ENCODE measurements at regions of chr20 and their contacts with region 1.

Region 1: GRCh38 chr20:43408848-43409576 is 48.7 kb upstream of the SRSF6 start:
- DNase-seq: peak; percentile 40
- H3K4me3 Mint-ChIP-seq: no peak overlapping the region
- H3K27ac Mint-ChIP-seq: no peak overlapping the region
- H3K4me1 Mint-ChIP-seq: no peaks in the 10 kb centered on the region
- H3K27me3 Mint-ChIP-seq: peaks cover 78% of the 10 kb centered on the region
- CTCF ChIP-seq: peak; percentile 79

Region 2: DNA sequence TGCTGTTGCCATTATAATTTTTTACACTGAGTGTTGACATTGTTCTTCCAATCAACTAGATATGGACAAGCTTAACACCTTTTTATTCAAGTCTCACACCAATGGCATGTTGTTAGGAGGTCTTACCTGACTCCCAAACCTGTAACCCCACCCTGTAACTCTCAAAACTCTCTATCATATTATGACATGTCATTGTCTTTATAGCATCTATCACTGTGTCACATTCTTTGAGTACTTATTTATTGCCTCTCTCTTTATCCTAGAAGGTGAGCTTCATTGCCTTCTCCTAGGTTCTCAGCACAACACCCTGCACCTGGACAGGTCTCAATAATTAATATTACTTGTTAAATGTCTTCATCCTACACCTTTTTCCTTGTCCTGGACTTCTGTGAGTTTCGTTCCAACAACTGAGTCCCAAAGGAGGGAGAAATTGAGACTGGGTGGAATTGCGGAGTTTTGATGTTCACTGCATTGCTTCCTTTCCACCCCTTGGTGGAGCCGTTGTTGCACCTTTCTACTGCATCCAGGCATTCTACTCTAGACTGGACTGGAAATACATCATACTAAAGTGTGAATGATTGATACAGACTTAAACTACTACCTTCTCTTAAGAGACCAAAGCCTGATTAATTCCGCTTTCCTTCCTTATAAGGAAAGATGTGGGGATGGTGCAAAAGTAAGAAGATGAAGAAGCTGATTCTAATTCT is 1452.9 kb before region 1 on chr20:
- CTCF ChIA-PET with region 1: interaction called, 3 read pairs
- intact Hi-C with region 1: loop called (anchors 5 kb)
- DNase-seq: peak; percentile 18
- H3K4me3 Mint-ChIP-seq: no peak overlapping the region
- H3K27ac Mint-ChIP-seq: no peak overlapping the region
- H3K4me1 Mint-ChIP-seq: no peaks in the 10 kb centered on the region
- H3K27me3 Mint-ChIP-seq: peaks cover 38% of the 10 kb centered on the region
- CTCF ChIP-seq: peak; percentile 23

Region 3: DNA sequence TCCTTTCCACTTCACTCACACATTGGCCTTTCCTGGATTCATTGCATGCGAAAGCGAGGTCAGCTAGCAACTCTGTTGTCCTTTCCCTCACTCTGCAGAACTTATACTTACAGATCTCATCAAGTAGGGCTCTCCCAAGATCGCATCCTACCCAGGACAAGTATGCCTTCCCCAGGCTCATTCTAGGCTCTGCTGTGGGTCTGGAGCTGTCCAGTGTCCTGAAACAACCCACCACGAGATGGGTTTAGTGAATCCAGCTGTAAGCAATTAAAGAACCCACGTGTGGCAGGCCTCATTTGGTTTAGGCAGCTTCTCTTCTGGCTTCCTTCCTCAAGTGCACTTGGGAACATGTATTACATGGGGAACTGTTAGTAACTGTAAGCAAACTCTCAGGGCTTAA is 1384.4 kb before region 1 on chr20:
- CTCF ChIA-PET with region 1: no interaction called
- intact Hi-C with region 1: loop called (anchors 5 kb)
- DNase-seq: no peak
- H3K4me3 Mint-ChIP-seq: no peak overlapping the region
- H3K27ac Mint-ChIP-seq: no peak overlapping the region
- H3K4me1 Mint-ChIP-seq: no peaks in the 10 kb centered on the region
- H3K27me3 Mint-ChIP-seq: peaks cover 18% of the 10 kb centered on the region
- CTCF ChIP-seq: no peak

Region 4: GRCh38 chr20:43238833-43239232 is 170.2 kb before region 1 on chr20:
- CTCF ChIA-PET with region 1: no interaction called
- intact Hi-C with region 1: loop called (anchors 5 kb)
- DNase-seq: peak; percentile 15
- H3K4me3 Mint-ChIP-seq: no peak overlapping the region
- H3K27ac Mint-ChIP-seq: no peak overlapping the region
- H3K4me1 Mint-ChIP-seq: no peaks in the 10 kb centered on the region
- H3K27me3 Mint-ChIP-seq: peaks cover 100% of the 10 kb centered on the region
- CTCF ChIP-seq: no peak

Measured in Calu3 (cell line).